ENCODE measurements at regions of chr1 and their contacts with region 1.

Region 1: DNA sequence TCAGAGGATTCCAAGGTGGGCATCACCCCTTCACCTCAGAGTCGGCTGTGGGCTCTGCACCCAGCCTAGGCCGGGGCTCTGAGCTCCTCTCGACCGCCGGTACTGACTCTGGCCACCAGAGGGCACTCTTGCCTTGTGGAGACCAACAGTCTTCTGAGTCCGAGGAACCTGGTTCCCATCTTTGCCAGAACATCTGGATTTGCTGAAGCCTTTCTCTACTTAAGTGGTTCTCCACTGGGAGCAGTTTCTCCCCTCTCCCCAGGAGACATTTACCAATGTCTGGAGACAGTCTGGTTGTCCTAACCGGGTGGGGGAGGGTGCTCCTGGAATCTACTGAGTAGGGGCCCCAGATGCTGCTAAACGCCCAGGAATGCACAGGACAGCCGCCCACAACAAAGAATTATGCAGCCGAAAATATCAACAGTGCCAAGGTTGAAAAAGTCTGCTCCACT is 9.4 kb downstream of the ETV3L start:
- DNase-seq: peak; percentile 80 to 91
- ATAC-seq: peak; percentile 77 to 95 (median 84)
- H3K4me3 ChIP-seq: no peak overlapping the region
- H3K4me3 Mint-ChIP-seq: no peak overlapping the region
- H3K27ac ChIP-seq: no peak overlapping the region
- H3K27ac Mint-ChIP-seq: no peak overlapping the region
- H3K4me1 ChIP-seq: peaks cover 3% of the 10 kb centered on the region
- H3K4me1 Mint-ChIP-seq: peaks cover 0 to 7% of the 10 kb centered on the region in 2 donors
- H3K27me3 ChIP-seq: no peaks in the 10 kb centered on the region
- H3K27me3 Mint-ChIP-seq: no peaks in the 10 kb centered on the region
- CTCF ChIP-seq: peak; percentile 94

Region 2: GRCh38 chr1:155794605-155795245 is 1295.5 kb before region 1 on chr1:
- intact Hi-C with region 1: no loop called
- DNase-seq: no peak
- ATAC-seq: no peak
- H3K4me3 ChIP-seq: no peak overlapping the region
- H3K4me3 Mint-ChIP-seq: no peak overlapping the region
- H3K27ac ChIP-seq: no peak overlapping the region
- H3K27ac Mint-ChIP-seq: peak overlapping the region in 1 of 2 donors; percentile 3
- H3K4me1 ChIP-seq: no peaks in the 10 kb centered on the region
- H3K4me1 Mint-ChIP-seq: no peaks in the 10 kb centered on the region
- H3K27me3 ChIP-seq: no peaks in the 10 kb centered on the region
- H3K27me3 Mint-ChIP-seq: no peaks in the 10 kb centered on the region
- CTCF ChIP-seq: no peak

Region 3: GRCh38 chr1:157124855-157125254 is 34.6 kb after region 1 on chr1:
- intact Hi-C with region 1: no loop called
- DNase-seq: no peak
- ATAC-seq: peak in 1 of 3 donors; percentile 41
- H3K4me3 ChIP-seq: no peak overlapping the region
- H3K4me3 Mint-ChIP-seq: no peak overlapping the region
- H3K27ac ChIP-seq: no peak overlapping the region
- H3K27ac Mint-ChIP-seq: peak overlapping the region in 1 of 2 donors; percentile 47
- H3K4me1 ChIP-seq: no peaks in the 10 kb centered on the region
- H3K4me1 Mint-ChIP-seq: peaks cover 46 to 49% of the 10 kb centered on the region in 2 donors
- H3K27me3 ChIP-seq: no peaks in the 10 kb centered on the region
- H3K27me3 Mint-ChIP-seq: no peaks in the 10 kb centered on the region
- CTCF ChIP-seq: no peak

Region 4: GRCh38 chr1:157156058-157156541 is 65.9 kb after region 1 on chr1:
- intact Hi-C with region 1: loop called (anchors 1 kb)
- DNase-seq: peak; percentile 75 to 87
- ATAC-seq: peak; percentile 71 to 92 (median 90)
- H3K4me3 ChIP-seq: no peak overlapping the region
- H3K4me3 Mint-ChIP-seq: peak overlapping the region; percentile 52
- H3K27ac ChIP-seq: no peak overlapping the region
- H3K27ac Mint-ChIP-seq: no peak overlapping the region
- H3K4me1 ChIP-seq: peaks cover 23% of the 10 kb centered on the region
- H3K4me1 Mint-ChIP-seq: peaks cover 14 to 15% of the 10 kb centered on the region in 2 donors
- H3K27me3 ChIP-seq: no peaks in the 10 kb centered on the region
- H3K27me3 Mint-ChIP-seq: peaks cover 12 to 33% of the 10 kb centered on the region in 2 donors
- CTCF ChIP-seq: peak; percentile 97

Region 5: DNA sequence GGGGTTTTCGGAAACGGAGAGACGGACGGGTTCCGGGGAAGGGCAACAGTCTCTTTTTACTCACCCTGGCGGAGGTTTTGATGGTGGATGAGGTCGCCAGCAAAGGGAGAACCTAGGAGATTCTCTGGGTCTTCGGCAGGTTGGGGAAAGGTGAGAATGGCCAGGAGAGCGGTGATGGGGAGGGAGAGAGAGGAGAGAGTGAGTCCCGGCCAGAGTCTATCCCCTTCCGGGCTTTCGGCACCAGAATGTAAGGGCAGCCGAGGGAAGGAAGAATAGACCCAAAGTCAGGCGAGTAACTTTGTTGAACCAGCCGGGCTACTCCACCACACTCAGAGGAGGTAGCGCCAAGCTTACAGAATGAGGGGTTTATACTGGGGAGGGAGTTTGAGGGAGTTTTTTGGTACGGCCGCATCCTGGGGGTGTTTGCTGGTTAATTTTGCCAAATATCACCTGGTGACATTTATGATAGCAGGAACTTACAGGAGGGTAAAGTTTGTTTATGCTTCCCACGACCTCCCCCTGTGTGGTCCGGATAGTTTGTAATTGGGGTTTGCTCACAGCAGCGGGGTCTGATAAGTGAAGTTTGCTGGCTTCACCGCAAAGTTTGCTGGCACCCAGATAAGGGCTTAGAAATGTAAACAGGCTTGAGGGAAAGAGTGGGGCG is 189.0 kb after region 1 on chr1:
- intact Hi-C with region 1: no loop called
- DNase-seq: no peak
- ATAC-seq: no peak
- H3K4me3 ChIP-seq: no peak overlapping the region
- H3K4me3 Mint-ChIP-seq: no peak overlapping the region
- H3K27ac ChIP-seq: no peak overlapping the region
- H3K27ac Mint-ChIP-seq: no peak overlapping the region
- H3K4me1 ChIP-seq: no peaks in the 10 kb centered on the region
- H3K4me1 Mint-ChIP-seq: peaks cover 0 to 4% of the 10 kb centered on the region in 2 donors
- H3K27me3 ChIP-seq: peaks cover 1% of the 10 kb centered on the region
- H3K27me3 Mint-ChIP-seq: peaks cover 20 to 26% of the 10 kb centered on the region in 2 donors
- CTCF ChIP-seq: no peak

Measured in natural killer cell (primary cell).